ENCODE measurements at regions of chr12 and their contacts with region 1.

Region 1: GRCh38 chr12:6937481-6938297 is 5.9 kb upstream of the RNU7-1 start:
- DNase-seq: peak; percentile 91 to 93
- ATAC-seq: peak; percentile 91 to 94
- H3K4me3 ChIP-seq: peak overlapping the region; percentile 67 to 93 (median 80)
- H3K27ac ChIP-seq: peak overlapping the region; percentile 91 to 97 (median 95)
- H3K4me1 ChIP-seq: peaks cover 25 to 44% of the 10 kb centered on the region in 2 donors
- H3K27me3 ChIP-seq: no peaks in the 10 kb centered on the region
- CTCF ChIP-seq: peak; percentile 94 to 98 (median 95)
- POLR2A ChIP-seq: peak; percentile 64 to 69

Region 2: GRCh38 chr12:6927379-6928024 is 10.2 kb before region 1 on chr12 and contains the start of gene ATN1:
- in situ Hi-C with region 1: no loop called
- intact Hi-C with region 1: loop called (anchors 1 kb)
- DNase-seq: peak; percentile 60 to 74
- ATAC-seq: peak; percentile 41 to 55
- H3K4me3 ChIP-seq: peak within 1 kb of the TSS; percentile 70 to 92 (median 86)
- H3K27ac ChIP-seq: peak within 1 kb of the TSS; percentile 88 to 98 (median 95)
- H3K4me1 ChIP-seq: peaks cover 44 to 52% of the 10 kb centered on the region in 2 donors
- H3K27me3 ChIP-seq: no peaks in the 10 kb centered on the region
- CTCF ChIP-seq: no peak
- POLR2A ChIP-seq: peak in 1 of 2 donors; percentile 14
- total RNA-seq, gene ATN1: 11.5 to 31.5 (median 26.5) TPM

Region 3: DNA sequence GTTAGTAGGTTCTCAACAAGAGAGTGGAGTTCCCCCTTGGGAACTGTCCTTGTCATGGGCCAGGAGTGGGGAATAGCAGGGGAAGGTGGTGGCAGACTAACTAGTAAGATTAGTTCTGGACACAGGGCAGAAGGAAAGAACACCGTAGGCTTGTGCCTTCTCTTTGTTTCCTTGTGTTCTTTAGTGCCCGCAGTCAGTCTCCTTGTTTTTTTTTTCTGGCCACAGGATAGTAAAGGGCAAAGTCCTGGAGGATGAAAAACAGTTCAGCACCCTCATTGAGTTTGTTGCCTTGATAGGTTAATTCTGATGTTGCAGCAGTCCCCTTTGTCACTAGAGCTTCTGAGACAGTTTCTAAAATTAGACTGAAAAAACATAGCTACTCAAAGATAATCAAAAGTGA is 260.2 kb after region 1 on chr12:
- in situ Hi-C with region 1: no loop called
- intact Hi-C with region 1: no loop called
- DNase-seq: no peak
- ATAC-seq: no peak
- H3K4me3 ChIP-seq: no peak overlapping the region
- H3K27ac ChIP-seq: no peak overlapping the region
- H3K4me1 ChIP-seq: no peaks in the 10 kb centered on the region
- H3K27me3 ChIP-seq: no peaks in the 10 kb centered on the region
- CTCF ChIP-seq: no peak
- POLR2A ChIP-seq: no peak

Measured in gastrocnemius medialis (tissue), 4 donors.